Caco-2 (cell line): ENCODE measurements at regions of chr7 and their contacts with region 1.

Region 1: GRCh38 chr7:70775570-70776156 is 356.3 kb upstream of the GALNT17 start:
- DNase-seq: no peak
- H3K4me3 ChIP-seq: no peak overlapping the region
- H3K4me3 Mint-ChIP-seq: no peak overlapping the region
- H3K27ac Mint-ChIP-seq: no peak overlapping the region
- H3K4me1 ChIP-seq: peaks cover 2% of the 10 kb centered on the region; the same call in 1 of the 2 replicates
- H3K4me1 Mint-ChIP-seq: no peaks in the 10 kb centered on the region
- H3K27me3 ChIP-seq: no peaks in the 10 kb centered on the region
- H3K27me3 Mint-ChIP-seq: no peaks in the 10 kb centered on the region
- CTCF ChIP-seq: peak in 1 of 2 experiments; percentile 30

Region 2: GRCh38 chr7:69349291-69349690 is 1426.4 kb before region 1 on chr7:
- CTCF ChIA-PET with region 1: no interaction called
- POLR2A ChIA-PET with region 1: no interaction called
- intact Hi-C with region 1: no loop called
- DNase-seq: no peak
- H3K4me3 ChIP-seq: no peak overlapping the region
- H3K4me3 Mint-ChIP-seq: no peak overlapping the region
- H3K27ac Mint-ChIP-seq: no peak overlapping the region
- H3K4me1 ChIP-seq: no peaks in the 10 kb centered on the region
- H3K4me1 Mint-ChIP-seq: no peaks in the 10 kb centered on the region
- H3K27me3 ChIP-seq: no peaks in the 10 kb centered on the region
- H3K27me3 Mint-ChIP-seq: peaks cover 2% of the 10 kb centered on the region
- CTCF ChIP-seq: no peak

Region 3: GRCh38 chr7:70143075-70144044 is 632.3 kb before region 1 on chr7:
- CTCF ChIA-PET with region 1: no interaction called
- POLR2A ChIA-PET with region 1: no interaction called
- intact Hi-C with region 1: no loop called
- DNase-seq: no peak
- H3K4me3 ChIP-seq: no peak overlapping the region
- H3K4me3 Mint-ChIP-seq: no peak overlapping the region
- H3K27ac Mint-ChIP-seq: no peak overlapping the region
- H3K4me1 ChIP-seq: no peaks in the 10 kb centered on the region
- H3K4me1 Mint-ChIP-seq: no peaks in the 10 kb centered on the region
- H3K27me3 ChIP-seq: no peaks in the 10 kb centered on the region
- H3K27me3 Mint-ChIP-seq: peaks cover 8% of the 10 kb centered on the region
- CTCF ChIP-seq: no peak

Region 4: GRCh38 chr7:70557338-70557737 is 218.3 kb before region 1 on chr7:
- CTCF ChIA-PET with region 1: no interaction called
- POLR2A ChIA-PET with region 1: interaction called, 11 read pairs
- intact Hi-C with region 1: no loop called
- DNase-seq: no peak
- H3K4me3 ChIP-seq: no peak overlapping the region
- H3K4me3 Mint-ChIP-seq: no peak overlapping the region
- H3K27ac Mint-ChIP-seq: no peak overlapping the region
- H3K4me1 ChIP-seq: no peaks in the 10 kb centered on the region
- H3K4me1 Mint-ChIP-seq: no peaks in the 10 kb centered on the region
- H3K27me3 ChIP-seq: no peaks in the 10 kb centered on the region
- H3K27me3 Mint-ChIP-seq: no peaks in the 10 kb centered on the region
- CTCF ChIP-seq: no peak

Region 5: GRCh38 chr7:70720191-70720873 is 55.3 kb before region 1 on chr7:
- CTCF ChIA-PET with region 1: interaction called, 4 read pairs
- POLR2A ChIA-PET with region 1: no interaction called
- intact Hi-C with region 1: loop called (anchors 2 kb)
- DNase-seq: no peak
- H3K4me3 ChIP-seq: no peak overlapping the region
- H3K4me3 Mint-ChIP-seq: no peak overlapping the region
- H3K27ac Mint-ChIP-seq: peak overlapping the region; percentile 29
- H3K4me1 ChIP-seq: no peaks in the 10 kb centered on the region
- H3K4me1 Mint-ChIP-seq: peaks cover 10% of the 10 kb centered on the region
- H3K27me3 ChIP-seq: no peaks in the 10 kb centered on the region
- H3K27me3 Mint-ChIP-seq: no peaks in the 10 kb centered on the region
- CTCF ChIP-seq: peak in 1 of 2 experiments; percentile 1